Naive thymus-derived CD4-positive, alpha-beta T cell (primary cell): ENCODE measurements at regions of chr10 and their contacts with region 1.

Region 1: GRCh38 chr10:119517235-119518141 is 25.0 kb downstream of the RGS10 start:
- DNase-seq: peak in 6 of 9 donors; percentile 28 to 59 (median 44)
- ATAC-seq: peak; percentile 60
- H3K4me3 ChIP-seq: peak overlapping the region; percentile 42
- H3K4me3 Mint-ChIP-seq: peak overlapping the region; percentile 65 to 88 (median 78)
- H3K27ac ChIP-seq: peak overlapping the region; percentile 81
- H3K27ac Mint-ChIP-seq: peak overlapping the region; percentile 89 to 98 (median 95)
- H3K4me1 ChIP-seq: peaks cover 33 to 68% of the 10 kb centered on the region in 2 donors
- H3K4me1 Mint-ChIP-seq: peaks cover 45 to 86% (median 76%) of the 10 kb centered on the region in 7 donors
- H3K27me3 ChIP-seq: no peaks in the 10 kb centered on the region
- H3K27me3 Mint-ChIP-seq: no peaks in the 10 kb centered on the region

Region 2: DNA sequence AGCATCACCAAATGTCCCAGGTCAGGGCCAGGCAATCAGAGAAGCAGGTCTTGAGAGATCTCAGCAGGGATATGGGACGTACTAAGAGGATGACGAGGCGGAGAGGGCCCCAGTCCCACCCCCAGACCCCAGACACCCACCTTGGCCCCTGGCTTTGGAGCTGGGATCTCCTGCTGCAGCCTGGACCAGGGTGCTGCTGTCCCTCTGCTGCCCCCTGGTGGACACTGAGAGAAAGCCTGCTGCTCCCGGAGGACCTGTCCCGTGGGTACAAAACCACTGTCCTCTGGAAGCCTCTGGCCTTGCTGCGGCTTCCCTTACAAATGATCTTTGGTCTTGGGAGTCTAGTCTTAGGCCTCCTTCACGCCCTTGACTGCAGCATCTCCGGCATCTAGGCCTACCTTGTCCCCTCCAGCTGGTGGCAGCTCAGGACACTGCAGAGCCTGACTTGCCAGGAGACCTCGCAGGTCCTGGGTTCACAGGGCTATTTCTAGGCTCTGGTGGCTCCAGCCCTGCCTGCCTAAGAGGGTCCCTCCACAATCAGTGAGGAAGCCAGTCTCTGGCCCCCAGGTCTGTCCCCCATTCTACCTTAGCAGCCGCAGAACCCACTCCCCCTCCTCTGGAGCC is 72.1 kb before region 1 on chr10:
- CTCF ChIA-PET with region 1: no interaction called
- POLR2A ChIA-PET with region 1: no interaction called
- intact Hi-C with region 1: loop called in 1 of 2 experiments (anchors 1 kb)
- DNase-seq: peak; percentile 64 to 89 (median 76)
- ATAC-seq: peak; percentile 85
- H3K4me3 ChIP-seq: no peak overlapping the region
- H3K4me3 Mint-ChIP-seq: peak overlapping the region in 1 of 10 donors; percentile 60
- H3K27ac ChIP-seq: no peak overlapping the region
- H3K27ac Mint-ChIP-seq: peak overlapping the region in 8 of 9 donors; percentile 6 to 81 (median 52)
- H3K4me1 ChIP-seq: no peaks in the 10 kb centered on the region
- H3K4me1 Mint-ChIP-seq: peaks cover 12 to 23% (median 17%) of the 10 kb centered on the region in 7 donors
- H3K27me3 ChIP-seq: no peaks in the 10 kb centered on the region
- H3K27me3 Mint-ChIP-seq: no peaks in the 10 kb centered on the region

Region 3: GRCh38 chr10:119478111-119478802 is 39.2 kb before region 1 on chr10:
- CTCF ChIA-PET with region 1: no interaction called
- POLR2A ChIA-PET with region 1: interaction called, 5 read pairs
- intact Hi-C with region 1: loop called in 1 of 2 experiments (anchors 1 kb)
- DNase-seq: peak in 2 of 9 donors; percentile 5 to 35
- ATAC-seq: peak; percentile 64
- H3K4me3 ChIP-seq: no peak overlapping the region
- H3K4me3 Mint-ChIP-seq: peak overlapping the region; percentile 66 to 81 (median 71)
- H3K27ac ChIP-seq: no peak overlapping the region
- H3K27ac Mint-ChIP-seq: peak overlapping the region; percentile 23 to 81 (median 71)
- H3K4me1 ChIP-seq: peaks cover 20 to 26% of the 10 kb centered on the region in 2 donors
- H3K4me1 Mint-ChIP-seq: peaks cover 25 to 44% (median 35%) of the 10 kb centered on the region in 7 donors
- H3K27me3 ChIP-seq: no peaks in the 10 kb centered on the region
- H3K27me3 Mint-ChIP-seq: peaks cover 0 to 6% (median 0%) of the 10 kb centered on the region in 5 donors

Region 4: GRCh38 chr10:119489991-119490326 is 27.5 kb before region 1 on chr10:
- CTCF ChIA-PET with region 1: interaction called, 3 read pairs
- POLR2A ChIA-PET with region 1: interaction called, 10 read pairs
- intact Hi-C with region 1: loop called in 1 of 2 experiments (anchors 1 kb)
- DNase-seq: no peak
- ATAC-seq: no peak
- H3K4me3 ChIP-seq: peak overlapping the region; percentile 55
- H3K4me3 Mint-ChIP-seq: peak overlapping the region; percentile 53 to 92 (median 84)
- H3K27ac ChIP-seq: peak overlapping the region; percentile 83
- H3K27ac Mint-ChIP-seq: peak overlapping the region; percentile 80 to 98 (median 92)
- H3K4me1 ChIP-seq: peaks cover 24 to 36% of the 10 kb centered on the region in 2 donors
- H3K4me1 Mint-ChIP-seq: peaks cover 19 to 66% (median 59%) of the 10 kb centered on the region in 7 donors
- H3K27me3 ChIP-seq: no peaks in the 10 kb centered on the region
- H3K27me3 Mint-ChIP-seq: no peaks in the 10 kb centered on the region

Region 5: GRCh38 chr10:119496273-119496672 is 21.2 kb before region 1 on chr10:
- CTCF ChIA-PET with region 1: interaction called, 11 read pairs
- POLR2A ChIA-PET with region 1: interaction called, 129 read pairs
- intact Hi-C with region 1: no loop called
- DNase-seq: peak in 1 of 9 donors; percentile 71
- ATAC-seq: no peak
- H3K4me3 ChIP-seq: no peak overlapping the region
- H3K4me3 Mint-ChIP-seq: peak overlapping the region in 9 of 10 donors; percentile 7 to 51 (median 33)
- H3K27ac ChIP-seq: peak overlapping the region; percentile 58
- H3K27ac Mint-ChIP-seq: peak overlapping the region; percentile 74 to 100 (median 93)
- H3K4me1 ChIP-seq: peaks cover 26 to 66% of the 10 kb centered on the region in 2 donors
- H3K4me1 Mint-ChIP-seq: peaks cover 40 to 90% (median 84%) of the 10 kb centered on the region in 7 donors
- H3K27me3 ChIP-seq: no peaks in the 10 kb centered on the region
- H3K27me3 Mint-ChIP-seq: no peaks in the 10 kb centered on the region

Region 6: GRCh38 chr10:119502209-119502608 is 15.3 kb before region 1 on chr10:
- CTCF ChIA-PET with region 1: interaction called, 11 read pairs
- POLR2A ChIA-PET with region 1: interaction called, 129 read pairs
- intact Hi-C with region 1: loop called (anchors 1 kb)
- DNase-seq: peak; percentile 50 to 93 (median 91)
- ATAC-seq: peak; percentile 91
- H3K4me3 ChIP-seq: peak overlapping the region; percentile 46
- H3K4me3 Mint-ChIP-seq: peak overlapping the region; percentile 70 to 85 (median 82)
- H3K27ac ChIP-seq: peak overlapping the region; percentile 98
- H3K27ac Mint-ChIP-seq: peak overlapping the region; percentile 95 to 100 (median 99)
- H3K4me1 ChIP-seq: peaks cover 39 to 88% of the 10 kb centered on the region in 2 donors
- H3K4me1 Mint-ChIP-seq: peaks cover 56 to 98% (median 92%) of the 10 kb centered on the region in 7 donors
- H3K27me3 ChIP-seq: no peaks in the 10 kb centered on the region
- H3K27me3 Mint-ChIP-seq: no peaks in the 10 kb centered on the region